ENCODE measurements at regions of chrX and their contacts with region 1.

Region 1: DNA sequence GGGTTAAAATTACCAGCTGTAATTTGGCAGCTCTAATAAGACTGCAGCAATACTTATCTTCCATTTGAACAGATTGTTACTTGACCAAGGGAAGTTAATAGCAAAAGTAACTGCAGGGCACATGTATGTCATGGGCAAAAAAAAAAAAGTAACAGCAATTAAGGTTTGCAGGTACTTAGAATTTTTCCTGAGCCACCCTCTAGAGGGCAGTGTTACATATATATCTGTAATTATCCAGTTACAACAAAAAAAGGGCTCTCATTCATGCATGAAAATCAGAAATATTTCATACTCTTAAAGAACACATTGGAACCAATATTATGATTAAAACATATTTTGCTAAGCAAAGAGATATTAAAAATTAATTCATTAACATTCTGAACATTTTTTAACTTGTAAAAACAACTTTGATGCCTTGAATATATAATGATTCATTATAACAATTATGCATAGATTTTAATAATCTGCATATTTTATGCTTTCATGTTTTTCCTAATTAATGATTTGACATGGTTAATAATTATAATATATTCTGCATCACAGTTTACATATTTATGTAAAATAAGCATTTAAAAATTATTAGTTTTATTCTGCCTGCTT is 25.1 kb downstream of the XIAP start:
- DNase-seq: peak; percentile 42
- H3K4me3 Mint-ChIP-seq: no peak overlapping the region
- H3K27ac Mint-ChIP-seq: no peak overlapping the region
- H3K4me1 Mint-ChIP-seq: peaks cover 12% of the 10 kb centered on the region
- H3K27me3 Mint-ChIP-seq: no peaks in the 10 kb centered on the region
- CTCF ChIP-seq: peak; percentile 31

Region 2: GRCh38 chrX:123833387-123833786 is 51.5 kb before region 1 on chrX:
- CTCF ChIA-PET with region 1: no interaction called
- intact Hi-C with region 1: loop called (anchors 1 kb)
- DNase-seq: peak; percentile 70
- H3K4me3 Mint-ChIP-seq: peak overlapping the region; percentile 21
- H3K27ac Mint-ChIP-seq: no peak overlapping the region
- H3K4me1 Mint-ChIP-seq: peaks cover 45% of the 10 kb centered on the region
- H3K27me3 Mint-ChIP-seq: no peaks in the 10 kb centered on the region
- CTCF ChIP-seq: peak; percentile 52